ENCODE measurements at regions of chr7 and their contacts with region 1.

Region 1: GRCh38 chr7:129091484-129092002 is 36.6 kb upstream of the TNPO3 start:
- DNase-seq: peak; percentile 72
- H3K4me3 ChIP-seq: no peak overlapping the region
- H3K27ac ChIP-seq: no peak overlapping the region
- H3K4me1 ChIP-seq: no peaks in the 10 kb centered on the region
- H3K27me3 ChIP-seq: peaks cover 14% of the 10 kb centered on the region
- CTCF ChIP-seq: peak; percentile 99

Region 2: DNA sequence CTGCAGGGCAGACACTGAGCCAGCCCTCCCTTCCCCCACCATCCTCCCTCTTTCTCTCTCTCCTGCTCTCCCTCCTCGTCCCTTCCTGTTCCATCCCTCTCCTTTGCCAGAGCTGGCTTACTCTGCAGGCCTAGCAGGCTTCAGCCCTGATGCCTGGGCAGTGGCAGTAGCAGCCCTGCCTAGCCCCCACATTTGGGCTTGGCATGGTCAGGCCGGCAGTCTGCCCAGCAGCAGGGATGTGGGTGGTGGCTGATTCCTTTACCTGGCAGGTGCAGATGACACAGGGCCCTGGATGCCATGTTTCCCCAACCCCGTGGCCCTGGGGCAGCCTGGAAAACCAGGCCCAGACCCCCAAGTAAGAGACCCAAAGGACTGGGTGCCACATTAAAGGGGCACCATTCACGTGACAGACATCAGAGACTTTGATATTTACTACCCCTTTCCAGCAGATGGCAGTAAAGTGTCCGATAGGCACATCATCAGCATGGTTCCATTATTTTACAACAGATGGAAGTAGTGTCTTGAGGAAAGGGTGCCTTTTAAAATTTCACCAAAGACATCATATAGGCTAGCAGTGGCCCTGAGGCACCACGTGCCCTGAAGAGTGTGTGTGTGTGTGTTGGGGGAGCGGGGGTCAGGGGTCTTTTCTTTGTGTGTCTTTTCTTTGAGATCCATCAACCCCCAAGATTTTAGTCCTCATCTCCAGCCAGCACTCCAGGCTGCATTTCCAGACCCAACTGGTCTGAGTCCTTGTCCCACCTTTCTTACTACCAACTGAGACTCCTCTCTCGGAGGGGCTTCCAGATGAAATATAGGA is 187.0 kb before region 1 on chr7:
- intact Hi-C with region 1: loop called (anchors 10 kb)
- DNase-seq: no peak
- H3K4me3 ChIP-seq: no peak overlapping the region
- H3K27ac ChIP-seq: no peak overlapping the region
- H3K4me1 ChIP-seq: peaks cover 5% of the 10 kb centered on the region
- H3K27me3 ChIP-seq: peaks cover 52% of the 10 kb centered on the region
- CTCF ChIP-seq: peak; percentile 67